ENCODE measurements at regions of chr7 and their contacts with region 1.

Region 1: GRCh38 chr7:51123322-51124029 is 193.1 kb downstream of the COBL start:
- DNase-seq: peak in 1 of 2 donors; percentile 27
- ATAC-seq: peak in 4 of 8 donors; percentile 57 to 77 (median 64)
- H3K4me3 ChIP-seq: no peak overlapping the region
- H3K27ac ChIP-seq: peak overlapping the region in 7 of 10 donors; percentile 5 to 84 (median 69)
- H3K4me1 ChIP-seq: peaks cover 6 to 51% (median 33%) of the 10 kb centered on the region in 9 donors
- H3K27me3 ChIP-seq: no peaks in the 10 kb centered on the region
- CTCF ChIP-seq: no peak

Region 2: GRCh38 chr7:50782384-50783208 is 340.9 kb before region 1 on chr7 and contains the start of gene GRB10:
- intact Hi-C with region 1: loop called in 1 of 10 experiments (anchors 5 kb)
- DNase-seq: peak; percentile 37 to 48
- ATAC-seq: peak; percentile 41 to 88 (median 76)
- H3K4me3 ChIP-seq: peak within 1 kb of the TSS; percentile 7 to 65 (median 59)
- H3K27ac ChIP-seq: peak within 1 kb of the TSS in 5 of 10 donors; percentile 12 to 34 (median 26)
- H3K4me1 ChIP-seq: peaks cover 4 to 73% (median 45%) of the 10 kb centered on the region in 9 donors
- H3K27me3 ChIP-seq: peaks cover 0 to 6% (median 0%) of the 10 kb centered on the region in 7 donors
- CTCF ChIP-seq: peak in 7 of 9 donors; percentile 15 to 50 (median 28)
- total RNA-seq, gene GRB10: 25.5 to 48.7 (median 31.5) TPM

Region 3: GRCh38 chr7:50953820-50954219 is 169.7 kb before region 1 on chr7:
- intact Hi-C with region 1: loop called in 1 of 10 experiments (anchors 10 kb)
- DNase-seq: peak in 1 of 2 donors; percentile 19
- ATAC-seq: peak; percentile 67 to 95 (median 88)
- H3K4me3 ChIP-seq: no peak overlapping the region
- H3K27ac ChIP-seq: peak overlapping the region in 8 of 10 donors; percentile 8 to 61 (median 32)
- H3K4me1 ChIP-seq: peaks cover 0 to 31% (median 20%) of the 10 kb centered on the region in 9 donors
- H3K27me3 ChIP-seq: no peaks in the 10 kb centered on the region
- CTCF ChIP-seq: no peak

Region 4: GRCh38 chr7:50962962-50963374 is 160.5 kb before region 1 on chr7:
- intact Hi-C with region 1: loop called in 3 of 10 experiments (anchors 5 to 10 kb)
- DNase-seq: peak; percentile 80 to 84
- ATAC-seq: peak; percentile 93 to 98 (median 96)
- H3K4me3 ChIP-seq: no peak overlapping the region
- H3K27ac ChIP-seq: no peak overlapping the region
- H3K4me1 ChIP-seq: peaks cover 6 to 20% (median 13%) of the 10 kb centered on the region in 9 donors
- H3K27me3 ChIP-seq: no peaks in the 10 kb centered on the region
- CTCF ChIP-seq: no peak

Region 5: DNA sequence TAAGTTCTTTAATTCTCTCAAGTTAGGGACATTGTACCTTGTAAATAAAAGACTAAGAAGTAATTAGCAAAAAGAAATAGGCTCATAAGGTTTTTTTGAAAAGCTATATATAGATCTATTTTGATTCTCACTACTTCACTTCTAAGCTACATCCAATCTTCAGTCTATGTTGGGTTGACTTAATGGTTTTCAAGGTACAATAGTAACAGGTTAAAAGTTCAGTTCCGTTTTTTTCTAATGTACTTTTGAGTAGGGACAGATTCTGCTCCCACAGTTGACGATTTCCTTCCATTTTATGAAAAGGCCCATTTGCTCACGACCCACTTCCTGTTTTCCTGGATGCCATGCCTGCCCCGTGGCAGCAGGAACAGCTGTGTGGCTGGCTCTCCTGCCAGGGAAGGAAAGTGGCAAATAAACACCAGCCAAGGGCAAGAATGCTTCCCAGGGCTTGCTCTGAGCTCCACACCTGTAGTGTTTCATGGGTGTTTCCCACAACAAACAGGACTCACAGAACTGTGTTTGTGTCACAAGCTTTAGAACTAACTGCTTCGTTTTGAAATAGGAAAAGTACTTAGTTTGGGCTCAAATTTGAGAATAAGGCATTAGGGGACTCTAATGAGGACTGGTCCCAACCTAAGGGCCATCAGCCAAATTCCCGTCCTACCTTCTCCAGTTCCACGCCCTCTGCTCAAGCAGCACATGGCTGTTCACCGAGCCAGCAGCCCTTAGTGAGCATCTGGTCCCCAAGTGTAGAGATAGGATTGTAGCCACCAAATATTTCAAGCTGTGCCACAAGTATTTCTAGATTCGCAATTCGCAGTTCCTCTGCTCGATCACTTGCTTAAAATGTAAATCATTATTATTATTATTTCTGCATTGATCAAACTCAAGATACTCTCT is 47.5 kb before region 1 on chr7:
- intact Hi-C with region 1: loop called in 2 of 10 experiments (anchors 5 kb)
- DNase-seq: no peak
- ATAC-seq: peak in 7 of 8 donors; percentile 54 to 74 (median 65)
- H3K4me3 ChIP-seq: no peak overlapping the region
- H3K27ac ChIP-seq: peak overlapping the region in 7 of 10 donors; percentile 3 to 41 (median 27)
- H3K4me1 ChIP-seq: peaks cover 0 to 32% (median 23%) of the 10 kb centered on the region in 9 donors
- H3K27me3 ChIP-seq: no peaks in the 10 kb centered on the region
- CTCF ChIP-seq: no peak

Region 6: DNA sequence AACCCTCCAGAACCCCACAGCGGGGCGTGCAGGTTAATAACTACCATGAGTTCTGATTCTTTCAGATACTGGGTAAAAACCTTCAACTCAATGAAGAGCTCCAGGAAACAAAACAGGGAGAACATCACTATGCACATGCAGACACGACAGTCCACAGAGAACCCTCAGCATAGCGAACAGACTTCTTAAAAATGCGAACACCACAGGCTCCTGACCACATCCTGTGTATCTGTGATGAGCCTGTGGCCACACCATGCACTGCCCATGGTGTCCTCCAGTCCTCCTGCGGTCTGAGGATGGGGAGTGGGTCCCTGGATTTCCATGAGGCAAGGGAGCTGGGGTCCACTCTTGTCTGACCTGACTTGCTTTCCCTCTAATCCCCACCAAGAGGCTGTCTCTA is 86.0 kb after region 1 on chr7:
- intact Hi-C with region 1: no loop called
- DNase-seq: no peak
- ATAC-seq: peak in 1 of 8 donors; percentile 22
- H3K4me3 ChIP-seq: no peak overlapping the region
- H3K27ac ChIP-seq: no peak overlapping the region
- H3K4me1 ChIP-seq: peaks cover 0 to 4% (median 0%) of the 10 kb centered on the region in 9 donors
- H3K27me3 ChIP-seq: no peaks in the 10 kb centered on the region
- CTCF ChIP-seq: no peak

Region 7: GRCh38 chr7:51263631-51264484 is 140.4 kb after region 1 on chr7:
- intact Hi-C with region 1: no loop called
- DNase-seq: no peak
- ATAC-seq: peak in 7 of 8 donors; percentile 37 to 89 (median 50)
- H3K4me3 ChIP-seq: no peak overlapping the region
- H3K27ac ChIP-seq: peak overlapping the region in 8 of 10 donors; percentile 30 to 81 (median 56)
- H3K4me1 ChIP-seq: peaks cover 0 to 55% (median 4%) of the 10 kb centered on the region in 9 donors
- H3K27me3 ChIP-seq: no peaks in the 10 kb centered on the region
- CTCF ChIP-seq: no peak